ENCODE measurements at regions of chr6 and their contacts with region 1.

Region 1: GRCh38 chr6:26064619-26065257 is 22.5 kb upstream of the HFE start:
- DNase-seq: peak in 1 of 6 donors; percentile 36
- ATAC-seq: peak; percentile 76 to 82 (median 80)
- H3K4me3 ChIP-seq: no peak overlapping the region
- H3K27ac ChIP-seq: no peak overlapping the region
- H3K4me1 ChIP-seq: peaks cover 0 to 11% (median 0%) of the 10 kb centered on the region in 3 donors
- H3K27me3 ChIP-seq: no peaks in the 10 kb centered on the region
- CTCF ChIP-seq: peak; percentile 48 to 72 (median 66)

Region 2: DNA sequence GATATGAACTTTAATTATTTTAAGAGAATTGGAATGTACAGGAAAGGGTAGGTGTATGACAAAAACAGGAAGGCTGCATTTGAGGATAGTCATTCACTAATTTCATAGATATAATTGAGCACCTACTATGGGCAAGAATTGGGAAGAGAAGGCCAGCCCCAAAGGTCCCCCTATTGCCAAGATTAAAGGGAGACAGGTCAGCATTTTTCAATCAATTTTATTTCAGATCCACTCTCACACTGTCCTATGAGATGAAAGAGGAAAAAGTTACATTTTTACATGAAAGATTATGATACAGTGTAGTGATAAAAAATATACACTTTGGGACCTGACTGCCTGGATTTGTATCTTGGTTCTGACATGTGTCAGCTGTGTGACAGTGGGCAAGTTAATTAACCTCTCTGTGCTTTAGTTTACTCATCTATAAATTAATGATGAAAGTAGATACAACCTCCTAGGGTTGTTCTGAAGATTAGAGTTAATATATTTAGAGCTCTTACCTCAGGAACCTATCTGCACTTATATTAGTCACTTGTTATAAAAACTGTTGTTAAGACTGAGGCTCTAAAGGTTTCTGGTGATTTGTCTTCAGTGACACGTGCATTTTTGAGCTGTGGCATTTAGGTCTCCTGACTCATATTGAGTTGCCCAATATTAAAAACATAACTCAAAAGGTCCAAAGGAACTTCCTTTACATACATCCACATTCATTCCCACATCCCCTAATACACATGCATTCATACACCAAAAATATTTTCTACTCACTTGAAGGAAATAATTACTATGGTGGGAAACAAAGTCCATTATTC is 367.0 kb before region 1 on chr6:
- intact Hi-C with region 1: no loop called
- DNase-seq: no peak
- ATAC-seq: no peak
- H3K4me3 ChIP-seq: no peak overlapping the region
- H3K27ac ChIP-seq: no peak overlapping the region
- H3K4me1 ChIP-seq: peaks cover 0 to 4% (median 0%) of the 10 kb centered on the region in 3 donors
- H3K27me3 ChIP-seq: no peaks in the 10 kb centered on the region
- CTCF ChIP-seq: no peak

Region 3: GRCh38 chr6:26097268-26097875 is 32.6 kb after region 1 on chr6:
- intact Hi-C with region 1: loop called in 2 of 3 experiments (anchors 2 to 5 kb)
- DNase-seq: peak in 3 of 6 donors; percentile 47 to 76 (median 65)
- ATAC-seq: peak; percentile 84 to 98 (median 96)
- H3K4me3 ChIP-seq: no peak overlapping the region
- H3K27ac ChIP-seq: no peak overlapping the region
- H3K4me1 ChIP-seq: no peaks in the 10 kb centered on the region
- H3K27me3 ChIP-seq: no peaks in the 10 kb centered on the region
- CTCF ChIP-seq: peak; percentile 42 to 74 (median 65)

Region 4: GRCh38 chr6:26103770-26104456 is 39.2 kb after region 1 on chr6:
- intact Hi-C with region 1: loop called in 2 of 3 experiments (anchors 2 to 5 kb)
- DNase-seq: peak; percentile 82 to 92 (median 89)
- ATAC-seq: peak; percentile 88 to 93 (median 90)
- H3K4me3 ChIP-seq: peak overlapping the region; percentile 13 to 47 (median 27)
- H3K27ac ChIP-seq: peak overlapping the region; percentile 74 to 91 (median 80)
- H3K4me1 ChIP-seq: peaks cover 0 to 13% (median 11%) of the 10 kb centered on the region in 3 donors
- H3K27me3 ChIP-seq: no peaks in the 10 kb centered on the region
- CTCF ChIP-seq: peak in 1 of 4 donors; percentile 17

Region 5: DNA sequence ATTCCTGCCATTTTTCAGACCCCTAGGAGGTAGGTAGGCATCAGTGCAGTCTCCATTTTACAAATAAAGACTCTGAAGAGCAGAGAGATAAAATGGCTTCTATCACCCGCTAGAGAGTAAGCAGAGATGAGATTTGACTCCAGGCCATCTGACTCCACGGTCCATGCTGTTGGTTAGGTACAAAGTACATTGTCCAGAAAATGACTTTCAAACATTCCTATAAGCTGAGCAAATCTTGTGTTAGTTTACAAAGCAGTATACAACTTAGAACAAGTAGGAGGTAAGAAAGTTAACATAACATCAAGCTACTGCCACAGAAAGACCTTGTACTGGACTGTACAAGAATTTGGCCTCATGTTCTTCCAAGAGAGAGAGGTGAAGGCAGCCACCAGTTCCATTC is 450.2 kb after region 1 on chr6:
- intact Hi-C with region 1: no loop called
- DNase-seq: no peak
- ATAC-seq: no peak
- H3K4me3 ChIP-seq: no peak overlapping the region
- H3K27ac ChIP-seq: no peak overlapping the region
- H3K4me1 ChIP-seq: peaks cover 0 to 2% (median under 1%) of the 10 kb centered on the region in 3 donors
- H3K27me3 ChIP-seq: no peaks in the 10 kb centered on the region
- CTCF ChIP-seq: no peak

Measured in pancreas (tissue), 10 donors.